CD4-positive, alpha-beta T cell (primary cell): ENCODE measurements at regions of chr2 and their contacts with region 1.

Region 1: GRCh38 chr2:112181571-112182290 is 43.5 kb downstream of the FBLN7 start:
- DNase-seq: peak; percentile 60 to 89 (median 70)
- ATAC-seq: peak; percentile 74
- H3K4me3 ChIP-seq: peak overlapping the region; percentile 71
- H3K4me3 Mint-ChIP-seq: peak overlapping the region; percentile 96
- H3K27ac ChIP-seq: peak overlapping the region; percentile 86 to 90
- H3K27ac Mint-ChIP-seq: peak overlapping the region; percentile 94
- H3K4me1 ChIP-seq: peaks cover 55% of the 10 kb centered on the region
- H3K4me1 Mint-ChIP-seq: peaks cover 69% of the 10 kb centered on the region
- H3K27me3 ChIP-seq: no peaks in the 10 kb centered on the region
- H3K27me3 Mint-ChIP-seq: no peaks in the 10 kb centered on the region
- CTCF ChIP-seq: peak; percentile 22

Region 2: GRCh38 chr2:111239107-111239506 is 942.6 kb before region 1 on chr2:
- CTCF ChIA-PET with region 1: no interaction called
- POLR2A ChIA-PET with region 1: no interaction called
- intact Hi-C with region 1: no loop called
- DNase-seq: no peak
- ATAC-seq: no peak
- H3K4me3 ChIP-seq: no peak overlapping the region
- H3K4me3 Mint-ChIP-seq: no peak overlapping the region
- H3K27ac ChIP-seq: no peak overlapping the region
- H3K27ac Mint-ChIP-seq: no peak overlapping the region
- H3K4me1 ChIP-seq: no peaks in the 10 kb centered on the region
- H3K4me1 Mint-ChIP-seq: no peaks in the 10 kb centered on the region
- H3K27me3 ChIP-seq: no peaks in the 10 kb centered on the region
- H3K27me3 Mint-ChIP-seq: no peaks in the 10 kb centered on the region
- CTCF ChIP-seq: no peak

Region 3: GRCh38 chr2:111659416-111660281 is 522.1 kb before region 1 on chr2:
- CTCF ChIA-PET with region 1: no interaction called
- POLR2A ChIA-PET with region 1: no interaction called
- intact Hi-C with region 1: no loop called
- DNase-seq: peak in 2 of 14 experiments; percentile 58 to 67
- ATAC-seq: no peak
- H3K4me3 ChIP-seq: no peak overlapping the region
- H3K4me3 Mint-ChIP-seq: no peak overlapping the region
- H3K27ac ChIP-seq: no peak overlapping the region
- H3K27ac Mint-ChIP-seq: no peak overlapping the region
- H3K4me1 ChIP-seq: peaks cover 7% of the 10 kb centered on the region
- H3K4me1 Mint-ChIP-seq: no peaks in the 10 kb centered on the region
- H3K27me3 ChIP-seq: no peaks in the 10 kb centered on the region
- H3K27me3 Mint-ChIP-seq: no peaks in the 10 kb centered on the region
- CTCF ChIP-seq: no peak

Region 4: DNA sequence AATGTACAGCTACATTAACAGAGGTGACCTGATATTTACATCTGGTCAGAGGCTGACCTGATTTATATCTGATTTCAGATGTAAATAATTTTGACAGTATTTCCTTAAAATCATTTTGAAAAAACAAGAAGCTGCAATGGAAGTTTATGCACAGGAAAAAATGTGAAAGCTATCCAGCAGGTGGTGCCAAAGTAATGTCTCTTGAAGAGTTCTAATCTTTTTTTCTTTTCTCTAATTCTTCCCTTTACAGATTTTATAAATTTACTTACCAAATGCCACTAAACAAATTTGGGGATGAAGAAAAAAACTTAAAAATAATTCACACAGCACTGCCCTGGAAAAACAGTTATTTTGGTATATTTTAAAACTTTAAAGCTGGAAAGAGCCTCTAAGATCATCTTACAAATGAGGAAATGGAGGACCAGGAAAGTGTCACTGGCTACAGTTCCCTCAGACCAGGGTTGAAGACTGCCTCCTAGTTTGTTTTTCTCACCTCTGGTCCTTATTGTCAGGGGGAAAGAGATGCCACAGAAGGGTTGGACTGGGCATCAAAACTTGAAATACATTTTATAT is 60.0 kb before region 1 on chr2:
- CTCF ChIA-PET with region 1: interaction called, 14 read pairs
- POLR2A ChIA-PET with region 1: interaction called, 6 read pairs
- intact Hi-C with region 1: no loop called
- DNase-seq: peak in 11 of 14 experiments; percentile 20 to 76 (median 45)
- ATAC-seq: no peak
- H3K4me3 ChIP-seq: no peak overlapping the region
- H3K4me3 Mint-ChIP-seq: no peak overlapping the region
- H3K27ac ChIP-seq: no peak overlapping the region
- H3K27ac Mint-ChIP-seq: peak overlapping the region; percentile 35
- H3K4me1 ChIP-seq: no peaks in the 10 kb centered on the region
- H3K4me1 Mint-ChIP-seq: no peaks in the 10 kb centered on the region
- H3K27me3 ChIP-seq: no peaks in the 10 kb centered on the region
- H3K27me3 Mint-ChIP-seq: no peaks in the 10 kb centered on the region
- CTCF ChIP-seq: peak; percentile 80

Region 5: GRCh38 chr2:112156152-112156986 is 25.4 kb before region 1 on chr2:
- CTCF ChIA-PET with region 1: interaction called, 5 read pairs
- POLR2A ChIA-PET with region 1: interaction called, 30 read pairs
- intact Hi-C with region 1: no loop called
- DNase-seq: peak in 9 of 14 experiments; percentile 11 to 65 (median 44)
- ATAC-seq: no peak
- H3K4me3 ChIP-seq: peak overlapping the region; percentile 47
- H3K4me3 Mint-ChIP-seq: peak overlapping the region; percentile 83
- H3K27ac ChIP-seq: peak overlapping the region; percentile 46 to 60
- H3K27ac Mint-ChIP-seq: peak overlapping the region; percentile 89
- H3K4me1 ChIP-seq: peaks cover 33% of the 10 kb centered on the region
- H3K4me1 Mint-ChIP-seq: peaks cover 31% of the 10 kb centered on the region
- H3K27me3 ChIP-seq: no peaks in the 10 kb centered on the region
- H3K27me3 Mint-ChIP-seq: no peaks in the 10 kb centered on the region
- CTCF ChIP-seq: no peak

Region 6: GRCh38 chr2:112242384-112242783 is 60.7 kb after region 1 on chr2:
- CTCF ChIA-PET with region 1: interaction called, 4 read pairs
- POLR2A ChIA-PET with region 1: interaction called, 14 read pairs
- intact Hi-C with region 1: no loop called
- DNase-seq: no peak
- ATAC-seq: peak; percentile 77
- H3K4me3 ChIP-seq: no peak overlapping the region
- H3K4me3 Mint-ChIP-seq: peak overlapping the region; percentile 43
- H3K27ac ChIP-seq: no peak overlapping the region
- H3K27ac Mint-ChIP-seq: peak overlapping the region; percentile 68
- H3K4me1 ChIP-seq: no peaks in the 10 kb centered on the region
- H3K4me1 Mint-ChIP-seq: peaks cover 63% of the 10 kb centered on the region
- H3K27me3 ChIP-seq: no peaks in the 10 kb centered on the region
- H3K27me3 Mint-ChIP-seq: no peaks in the 10 kb centered on the region
- CTCF ChIP-seq: no peak

Region 7: DNA sequence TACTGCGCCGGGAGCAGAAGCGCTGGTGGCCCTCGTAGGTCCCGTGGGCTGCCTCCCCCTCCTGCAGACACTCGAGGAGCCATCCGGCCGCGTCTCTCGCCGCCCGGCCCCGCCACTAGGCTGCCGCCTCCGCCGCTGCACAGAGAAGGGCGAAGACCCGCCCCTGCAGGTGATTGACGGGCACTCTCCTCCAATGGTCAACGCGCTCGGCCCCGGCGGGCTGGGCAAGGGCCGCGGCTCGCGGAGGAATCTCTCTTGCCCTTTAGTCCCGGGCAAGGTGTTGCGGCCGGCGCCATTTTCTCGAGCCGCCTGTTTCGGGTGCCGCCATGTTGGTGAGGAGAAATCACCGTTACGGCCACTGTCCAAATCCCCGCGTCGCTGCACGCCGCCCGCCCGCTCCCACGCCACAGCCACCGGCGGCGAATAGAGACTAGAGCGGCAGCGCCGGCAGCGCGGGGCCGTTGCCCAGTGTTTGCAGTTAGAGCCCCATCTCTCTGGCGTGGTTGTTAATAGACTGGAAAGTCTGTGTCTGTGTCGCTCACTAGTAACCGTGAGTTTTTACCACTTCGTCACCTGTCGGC is 93.7 kb after region 1 on chr2 and contains the start of gene ZC3H6:
- CTCF ChIA-PET with region 1: no interaction called
- POLR2A ChIA-PET with region 1: interaction called, 13 read pairs
- intact Hi-C with region 1: loop called in 1 of 2 experiments (anchors 5 kb)
- DNase-seq: peak; percentile 97 to 100 (median 100)
- ATAC-seq: peak; percentile 90
- H3K4me3 ChIP-seq: peak within 1 kb of the TSS; percentile 94
- H3K4me3 Mint-ChIP-seq: peak within 1 kb of the TSS; percentile 98
- H3K27ac ChIP-seq: peak within 1 kb of the TSS; percentile 100
- H3K27ac Mint-ChIP-seq: peak within 1 kb of the TSS; percentile 100
- H3K4me1 ChIP-seq: peaks cover 8% of the 10 kb centered on the region
- H3K4me1 Mint-ChIP-seq: peaks cover 33% of the 10 kb centered on the region
- H3K27me3 ChIP-seq: no peaks in the 10 kb centered on the region
- H3K27me3 Mint-ChIP-seq: no peaks in the 10 kb centered on the region
- CTCF ChIP-seq: no peak
- total RNA-seq, gene ZC3H6: 18.0 to 21.4 TPM